HEK293 (cell line): ENCODE measurements at regions of chr19 and their contacts with region 1.

Region 1: DNA sequence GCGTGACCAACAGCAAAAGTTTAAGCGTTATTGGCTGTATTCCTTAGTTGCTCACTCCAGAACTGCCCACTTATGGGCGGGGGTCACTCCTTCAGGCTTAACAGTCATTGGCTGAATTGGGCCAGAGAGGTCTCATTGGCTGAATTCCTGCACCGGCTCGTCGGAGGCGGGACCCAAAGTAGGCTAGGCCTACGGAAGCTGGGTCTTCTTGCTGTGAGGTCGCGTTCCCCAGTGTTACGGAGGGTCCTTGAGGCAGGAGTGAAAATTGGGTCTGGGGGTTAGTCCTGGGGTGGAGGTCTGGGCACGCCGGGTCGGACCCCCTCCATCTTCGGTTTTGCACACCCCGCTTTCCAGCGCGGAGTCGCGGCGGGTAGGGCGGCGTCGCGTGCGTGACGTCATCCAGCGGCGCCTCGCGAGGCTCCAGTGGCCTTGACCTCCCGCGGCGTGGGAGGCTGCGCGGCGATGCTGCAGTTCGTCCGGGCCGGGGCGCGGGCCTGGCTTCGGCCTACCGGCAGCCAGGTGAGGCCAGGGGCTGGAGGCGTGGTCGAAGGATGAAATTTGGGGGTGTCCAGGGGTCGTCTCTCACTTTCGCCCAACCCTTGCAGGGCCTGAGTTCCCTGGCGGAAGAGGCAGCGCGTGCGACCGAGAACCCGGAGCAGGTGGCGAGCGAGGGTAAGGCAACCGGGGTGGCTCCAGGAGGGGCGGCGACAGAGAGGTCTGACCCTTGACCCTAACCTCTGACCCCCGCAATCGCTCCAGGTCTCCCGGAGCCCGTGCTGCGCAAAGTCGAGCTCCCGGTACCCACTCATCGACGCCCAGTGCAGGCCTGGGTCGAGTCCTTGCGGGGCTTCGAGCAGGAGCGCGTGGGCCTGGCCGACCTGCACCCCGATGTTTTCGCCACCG is at the start of gene MRPL4:
- H3K4me3 ChIP-seq: peak within 1 kb of the TSS; percentile 100
- H3K27ac ChIP-seq: peak within 1 kb of the TSS; percentile 26; the same call in 1 of the 2 replicates
- H3K4me1 ChIP-seq: no peaks in the 10 kb centered on the region
- CTCF ChIP-seq: peak; percentile 85

Region 2: GRCh38 chr19:9934132-9934950 is 317.7 kb before region 1 on chr19:
- CTCF ChIA-PET with region 1: interaction called, 33 read pairs
- POLR2A ChIA-PET with region 1: no interaction called
- H3K4me3 ChIP-seq: no peak overlapping the region
- H3K27ac ChIP-seq: no peak overlapping the region
- H3K4me1 ChIP-seq: peaks cover 6% of the 10 kb centered on the region; the same call in 1 of the 2 replicates
- CTCF ChIP-seq: peak; percentile 86

Region 3: GRCh38 chr19:10166046-10166445 is 86.0 kb before region 1 on chr19:
- CTCF ChIA-PET with region 1: interaction called, 11 read pairs
- POLR2A ChIA-PET with region 1: interaction called, 3 read pairs
- H3K4me3 ChIP-seq: no peak overlapping the region
- H3K27ac ChIP-seq: no peak overlapping the region
- H3K4me1 ChIP-seq: no peaks in the 10 kb centered on the region
- CTCF ChIP-seq: no peak

Region 4: DNA sequence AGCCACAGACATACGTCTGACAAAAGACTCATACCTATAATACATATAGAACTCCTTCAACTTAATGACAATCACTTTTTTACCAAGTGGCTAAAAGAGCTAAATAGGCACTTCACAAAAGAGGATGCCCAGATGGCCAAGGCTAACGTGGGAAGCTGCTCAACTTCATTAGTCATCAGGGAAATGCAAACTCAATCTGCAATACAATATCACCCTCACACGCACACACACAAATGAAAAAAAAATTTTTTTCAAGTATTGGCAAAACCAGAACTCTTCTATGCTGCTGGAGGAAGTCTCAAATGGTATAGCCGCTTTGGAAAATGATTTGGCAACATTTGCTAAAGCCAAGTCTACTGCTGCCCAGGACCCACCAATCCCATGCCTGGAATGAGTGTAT is 42.7 kb before region 1 on chr19:
- CTCF ChIA-PET with region 1: interaction called, 11 read pairs
- POLR2A ChIA-PET with region 1: no interaction called
- H3K4me3 ChIP-seq: no peak overlapping the region
- H3K27ac ChIP-seq: no peak overlapping the region
- H3K4me1 ChIP-seq: no peaks in the 10 kb centered on the region
- CTCF ChIP-seq: no peak

Region 5: DNA sequence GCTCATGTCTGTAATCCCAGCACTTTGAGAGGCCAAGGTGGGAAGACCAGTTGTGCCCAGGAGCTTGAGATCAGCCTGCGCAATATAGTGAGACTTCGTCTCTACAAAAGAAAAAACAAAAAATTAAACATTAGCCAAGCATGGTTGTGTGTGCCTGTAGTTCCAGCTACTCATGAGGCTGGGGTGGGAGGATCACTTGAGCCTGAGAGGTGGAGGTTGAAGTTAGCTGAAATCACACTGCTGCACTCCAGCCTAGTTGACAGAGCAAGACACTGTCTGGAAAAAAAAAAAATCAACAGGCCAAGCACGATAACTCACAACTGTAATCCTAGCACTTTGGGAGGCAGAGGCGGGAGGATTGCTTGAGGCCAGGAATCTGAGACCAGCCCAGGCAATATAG is 17.0 kb before region 1 on chr19:
- CTCF ChIA-PET with region 1: interaction called, 23 read pairs
- POLR2A ChIA-PET with region 1: interaction called, 3 read pairs
- H3K4me3 ChIP-seq: no peak overlapping the region
- H3K27ac ChIP-seq: no peak overlapping the region
- H3K4me1 ChIP-seq: no peaks in the 10 kb centered on the region
- CTCF ChIP-seq: no peak

Region 6: DNA sequence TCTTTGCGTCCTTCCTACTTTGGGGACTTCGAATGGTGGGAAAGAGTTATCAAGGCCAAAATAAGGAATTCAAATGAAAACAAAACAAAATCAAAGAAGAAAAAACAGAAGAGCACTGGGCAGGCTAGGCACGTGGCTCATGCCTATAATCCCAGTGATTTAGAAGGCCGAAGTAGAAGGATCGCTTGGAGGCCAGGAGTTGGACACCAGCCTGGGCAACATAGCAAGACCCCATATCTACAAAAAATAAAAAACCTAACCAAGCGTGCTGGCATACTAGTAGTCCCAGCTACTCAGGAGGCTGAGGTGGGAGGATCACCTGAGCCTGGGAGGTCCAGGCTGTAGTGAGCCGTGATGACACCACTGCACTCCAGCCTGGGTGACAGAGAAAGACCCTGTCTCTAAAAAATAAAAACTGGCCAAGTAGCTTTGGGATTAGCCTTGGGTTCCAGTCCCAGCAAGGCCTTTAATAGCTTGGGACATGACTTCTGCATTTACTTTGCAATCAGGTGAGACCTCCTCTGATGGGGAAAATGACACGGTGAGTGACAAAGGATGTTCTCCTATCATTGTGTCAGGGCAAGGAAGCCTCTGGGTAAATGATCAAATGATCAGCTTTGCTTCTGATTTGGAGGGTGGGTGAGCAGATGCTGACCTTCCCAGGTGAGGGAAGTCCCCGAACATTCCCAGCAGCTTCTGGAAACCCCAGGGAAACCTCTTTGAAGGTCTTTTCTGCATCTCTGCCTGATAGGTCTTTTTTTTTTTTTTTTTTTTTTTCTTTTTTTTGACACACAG is 25.9 kb after region 1 on chr19:
- CTCF ChIA-PET with region 1: no interaction called
- POLR2A ChIA-PET with region 1: no interaction called
- H3K4me3 ChIP-seq: no peak overlapping the region
- H3K27ac ChIP-seq: no peak overlapping the region
- H3K4me1 ChIP-seq: no peaks in the 10 kb centered on the region
- CTCF ChIP-seq: no peak